ENCODE measurements at regions of chr11 and their contacts with region 1.

Region 1: GRCh38 chr11:111230122-111230465 is 15.4 kb upstream of the POU2AF2 start:
- DNase-seq: no peak
- ATAC-seq: peak; percentile 26 to 58 (median 38)
- H3K4me3 ChIP-seq: peak overlapping the region in 9 of 12 donors; percentile 39 to 64 (median 52)
- H3K27ac ChIP-seq: no peak overlapping the region
- H3K4me1 ChIP-seq: peaks cover 0 to 5% (median 0%) of the 10 kb centered on the region in 12 donors
- H3K27me3 ChIP-seq: peaks cover 0 to 7% (median 0%) of the 10 kb centered on the region in 9 donors
- CTCF ChIP-seq: no peak
- POLR2A ChIP-seq: no peak

Region 2: GRCh38 chr11:110173811-110174644 is 1056.1 kb before region 1 on chr11:
- intact Hi-C with region 1: loop called in 1 of 10 experiments (anchors 10 kb)
- DNase-seq: peak; percentile 44 to 72 (median 62)
- ATAC-seq: peak in 3 of 4 donors; percentile 75 to 82 (median 77)
- H3K4me3 ChIP-seq: peak overlapping the region in 8 of 12 donors; percentile 14 to 51 (median 28)
- H3K27ac ChIP-seq: no peak overlapping the region
- H3K4me1 ChIP-seq: peaks cover 0 to 14% (median 3%) of the 10 kb centered on the region in 12 donors
- H3K27me3 ChIP-seq: no peaks in the 10 kb centered on the region
- CTCF ChIP-seq: peak; percentile 65 to 83 (median 75)
- POLR2A ChIP-seq: no peak

Region 3: GRCh38 chr11:110429731-110430266 is 800.3 kb before region 1 on chr11 and contains the start of gene FDX1:
- intact Hi-C with region 1: loop called in 1 of 10 experiments (anchors 10 kb)
- DNase-seq: peak; percentile 79 to 91 (median 90)
- ATAC-seq: peak; percentile 86 to 97 (median 95)
- H3K4me3 ChIP-seq: peak within 1 kb of the TSS; percentile 73 to 94 (median 84)
- H3K27ac ChIP-seq: peak within 1 kb of the TSS; percentile 74 to 97 (median 91)
- H3K4me1 ChIP-seq: peaks cover 0 to 39% (median 31%) of the 10 kb centered on the region in 12 donors
- H3K27me3 ChIP-seq: no peaks in the 10 kb centered on the region
- CTCF ChIP-seq: peak; percentile 32 to 89 (median 70)
- POLR2A ChIP-seq: peak in 1 of 2 donors; percentile 76
- total RNA-seq, gene FDX1: 15.2 to 28.5 (median 22.5) TPM

Region 4: DNA sequence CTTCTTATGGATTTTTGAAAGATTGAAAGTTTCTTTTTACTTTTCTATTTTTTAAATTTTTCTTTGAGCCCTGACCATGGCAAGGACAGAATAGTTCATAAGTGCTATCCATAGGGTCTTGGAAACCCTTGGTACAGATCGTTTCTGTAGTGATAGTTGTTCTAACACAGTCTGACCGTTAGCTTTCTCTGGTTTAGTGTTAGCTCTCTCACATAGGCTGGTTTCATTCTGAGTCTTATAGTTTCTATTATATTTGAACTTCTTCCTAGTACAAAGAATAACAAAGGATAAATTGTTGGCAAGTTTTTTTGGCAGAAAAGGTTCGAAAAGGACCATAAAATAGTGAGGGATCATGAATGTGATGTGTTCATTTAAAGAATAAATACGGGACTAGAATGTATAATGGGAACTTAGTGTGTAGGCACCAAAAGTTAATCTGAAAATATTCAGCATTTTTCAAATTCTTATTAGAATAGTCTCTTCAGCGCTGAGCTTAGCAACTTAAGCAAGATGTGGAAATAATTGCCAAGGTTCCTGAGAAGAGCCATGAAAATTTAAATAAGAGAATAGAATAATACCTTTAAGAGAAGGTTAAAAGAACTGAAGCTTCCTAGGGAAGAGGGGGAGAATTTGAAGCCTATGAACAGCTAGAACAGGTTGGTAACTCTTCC is 776.3 kb before region 1 on chr11:
- intact Hi-C with region 1: loop called in 4 of 10 experiments (anchors 5 to 10 kb)
- DNase-seq: no peak
- ATAC-seq: no peak
- H3K4me3 ChIP-seq: no peak overlapping the region
- H3K27ac ChIP-seq: no peak overlapping the region
- H3K4me1 ChIP-seq: peaks cover 0 to 10% (median 0%) of the 10 kb centered on the region in 12 donors
- H3K27me3 ChIP-seq: no peaks in the 10 kb centered on the region
- CTCF ChIP-seq: no peak
- POLR2A ChIP-seq: no peak

Region 5: GRCh38 chr11:110711776-110712658 is 518.1 kb before region 1 on chr11 and contains the start of gene ARHGAP20:
- intact Hi-C with region 1: loop called in 4 of 10 experiments (anchors 5 to 10 kb)
- DNase-seq: peak; percentile 48 to 83 (median 61)
- ATAC-seq: peak; percentile 57 to 97 (median 94)
- H3K4me3 ChIP-seq: peak within 1 kb of the TSS; percentile 37 to 65 (median 59)
- H3K27ac ChIP-seq: peak within 1 kb of the TSS in 3 of 12 donors; percentile 23 to 74 (median 52)
- H3K4me1 ChIP-seq: peaks cover 0 to 29% (median 14%) of the 10 kb centered on the region in 12 donors
- H3K27me3 ChIP-seq: peaks cover 3 to 63% (median 26%) of the 10 kb centered on the region in 9 donors
- CTCF ChIP-seq: no peak
- POLR2A ChIP-seq: no peak
- total RNA-seq, gene ARHGAP20: 0.05 to 2.1 (median 0.44) TPM

Region 6: GRCh38 chr11:111269146-111269868 is 39.2 kb after region 1 on chr11:
- intact Hi-C with region 1: no loop called
- DNase-seq: no peak
- ATAC-seq: no peak
- H3K4me3 ChIP-seq: no peak overlapping the region
- H3K27ac ChIP-seq: no peak overlapping the region
- H3K4me1 ChIP-seq: no peaks in the 10 kb centered on the region
- H3K27me3 ChIP-seq: peaks cover 0 to 4% (median 0%) of the 10 kb centered on the region in 9 donors
- CTCF ChIP-seq: no peak
- POLR2A ChIP-seq: no peak

Region 7: DNA sequence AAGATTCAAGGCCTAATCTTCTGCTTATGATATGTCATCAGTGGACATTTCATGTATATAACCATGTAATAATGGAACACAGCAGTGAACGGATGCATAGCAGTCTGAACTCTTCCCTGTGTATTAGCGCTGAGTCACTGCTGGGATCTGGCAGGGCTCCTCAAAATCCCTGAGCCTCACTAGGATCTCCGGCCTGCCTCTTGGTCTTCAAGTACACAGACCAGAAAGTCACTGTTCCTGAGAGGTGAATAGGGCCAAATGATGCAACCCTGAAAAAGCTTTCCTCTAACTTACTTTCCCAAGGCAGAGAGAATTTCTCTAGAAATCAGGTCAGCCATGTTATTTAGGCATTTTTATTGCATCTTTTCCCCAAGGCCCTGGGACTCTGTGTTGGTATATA is 113.9 kb after region 1 on chr11:
- intact Hi-C with region 1: no loop called
- DNase-seq: peak in 3 of 5 donors; percentile 29 to 76 (median 63)
- ATAC-seq: peak; percentile 42 to 88 (median 74)
- H3K4me3 ChIP-seq: no peak overlapping the region
- H3K27ac ChIP-seq: peak overlapping the region in 1 of 12 donors; percentile 9
- H3K4me1 ChIP-seq: peaks cover 0 to 2% (median 0%) of the 10 kb centered on the region in 12 donors
- H3K27me3 ChIP-seq: peaks cover 0 to 4% (median 0%) of the 10 kb centered on the region in 9 donors
- CTCF ChIP-seq: no peak
- POLR2A ChIP-seq: no peak